ENCODE measurements at regions of chr17 and their contacts with region 1.

Region 1: DNA sequence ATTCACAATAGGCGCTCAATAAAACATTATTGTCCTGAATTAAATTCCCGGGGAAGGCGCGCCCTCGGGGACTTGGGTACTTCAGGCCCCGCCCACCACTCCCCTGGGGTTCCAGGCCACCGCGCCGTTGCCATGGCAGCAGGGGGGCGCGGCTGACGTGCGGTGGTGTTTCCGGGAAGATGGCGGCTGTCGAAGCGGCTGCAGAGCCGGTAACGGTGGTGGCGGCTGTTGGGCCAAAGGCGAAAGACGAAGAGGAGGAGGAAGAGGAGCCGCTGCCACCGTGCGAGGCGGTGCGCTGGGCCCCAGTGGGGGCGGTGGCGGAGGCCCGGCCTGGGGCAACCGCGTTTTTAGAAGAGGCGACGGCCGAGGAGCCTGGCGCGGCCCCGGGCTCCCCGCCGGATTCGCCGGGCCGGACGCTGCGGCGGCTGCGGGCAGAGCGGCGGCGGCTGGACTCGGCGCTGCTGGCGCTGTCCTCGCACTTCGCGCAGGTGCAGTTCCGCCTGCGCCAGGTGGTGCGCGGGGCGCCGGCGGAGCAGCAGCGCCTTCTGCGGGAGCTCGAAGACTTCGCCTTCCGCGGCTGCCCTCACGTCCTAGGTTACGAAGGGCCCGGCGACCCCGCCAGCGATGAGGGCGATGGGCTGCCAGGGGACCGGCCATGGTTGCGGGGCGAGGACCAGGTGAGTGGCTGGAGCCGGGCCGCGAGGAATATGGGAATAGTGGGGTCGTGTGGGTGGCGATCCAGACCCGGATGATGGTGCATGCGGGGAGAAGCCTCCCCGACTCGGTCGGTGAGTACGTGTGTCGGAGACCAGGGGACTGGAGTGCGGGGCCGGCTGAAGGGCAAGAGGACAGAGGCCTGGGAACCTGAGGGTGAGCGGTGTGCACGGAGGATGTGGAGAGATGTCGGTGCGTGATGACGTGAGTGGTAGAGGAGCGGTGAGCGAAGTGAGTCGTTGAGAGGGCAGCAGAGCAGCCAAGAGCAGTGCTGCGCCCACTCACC is at the start of gene RUNDC1:
- DNase-seq: peak; percentile 87
- H3K4me3 Mint-ChIP-seq: peak within 1 kb of the TSS; percentile 100
- H3K27ac Mint-ChIP-seq: peak within 1 kb of the TSS; percentile 99
- H3K4me1 Mint-ChIP-seq: peaks cover 42% of the 10 kb centered on the region
- H3K27me3 Mint-ChIP-seq: peaks cover 2% of the 10 kb centered on the region
- total RNA-seq, gene RUNDC1: 16.9 and 18.8 TPM in 2 replicates

Region 2: GRCh38 chr17:42566883-42567573 is 413.7 kb before region 1 on chr17 and contains the start of gene MLX:
- intact Hi-C with region 1: loop called (anchors 10 kb)
- DNase-seq: peak; percentile 91
- H3K4me3 Mint-ChIP-seq: peak within 1 kb of the TSS; percentile 89
- H3K27ac Mint-ChIP-seq: peak within 1 kb of the TSS; percentile 87
- H3K4me1 Mint-ChIP-seq: peaks cover 36% of the 10 kb centered on the region
- H3K27me3 Mint-ChIP-seq: no peaks in the 10 kb centered on the region
- total RNA-seq, gene MLX: 74.1 and 75.4 TPM in 2 replicates

Region 3: GRCh38 chr17:42832974-42833766 is 147.5 kb before region 1 on chr17 and contains the start of gene PSME3:
- intact Hi-C with region 1: loop called (anchors 5 kb)
- DNase-seq: peak; percentile 88
- H3K4me3 Mint-ChIP-seq: peak within 1 kb of the TSS; percentile 90
- H3K27ac Mint-ChIP-seq: peak within 1 kb of the TSS; percentile 93
- H3K4me1 Mint-ChIP-seq: peaks cover 23% of the 10 kb centered on the region
- H3K27me3 Mint-ChIP-seq: peaks cover 3% of the 10 kb centered on the region
- total RNA-seq, gene PSME3: 217 and 220 TPM in 2 replicates

Region 4: DNA sequence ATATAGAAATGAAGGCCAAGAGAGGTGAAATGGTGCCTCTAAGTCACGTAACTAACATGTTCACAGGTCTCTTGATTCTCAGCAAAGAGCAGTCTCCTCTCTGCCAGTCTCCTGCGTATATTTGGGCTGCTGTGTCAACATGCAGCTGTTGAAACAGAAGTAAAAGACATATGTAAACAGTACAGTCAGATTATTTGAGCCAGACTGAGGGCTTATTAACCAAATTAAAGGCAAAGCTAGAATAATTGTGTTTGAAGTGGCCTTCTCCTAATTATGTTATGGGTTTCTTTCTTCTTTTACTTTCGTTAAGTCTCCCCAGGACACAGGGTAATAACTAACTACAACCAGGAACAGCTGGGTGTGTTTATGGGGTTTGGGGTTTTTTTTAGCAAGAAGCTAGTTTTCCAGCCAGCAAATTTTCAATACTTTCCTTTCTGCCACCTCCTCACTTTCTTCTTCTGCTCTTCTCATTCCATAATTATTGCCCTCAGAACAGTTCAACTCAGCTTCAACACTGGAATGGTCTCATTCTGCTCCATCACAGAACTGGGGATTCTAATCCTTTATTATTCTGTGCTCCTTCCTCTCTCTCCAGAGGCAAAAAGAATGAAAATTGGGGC is 61.7 kb before region 1 on chr17:
- intact Hi-C with region 1: no loop called
- DNase-seq: no peak
- H3K4me3 Mint-ChIP-seq: no peak overlapping the region
- H3K27ac Mint-ChIP-seq: no peak overlapping the region
- H3K4me1 Mint-ChIP-seq: peaks cover 9% of the 10 kb centered on the region
- H3K27me3 Mint-ChIP-seq: peaks cover 16% of the 10 kb centered on the region

Measured in activated T-helper 1 cell treated with anti-CD3 and anti-CD28 coated beads, Interleukin-12 subunit alpha, Interleukin-12 subunit beta, Interleukin-2, Interleukin-4 antibody, amounts not matched to agents 30 ng/mL and 10 ng/mL and 1 ng/mL, durations not matched to agents 14 hours and 24 hours and 36 hours (primary cell).